BJ (cell line): ENCODE measurements at regions of chr16 and their contacts with region 1.

Region 1: GRCh38 chr16:81723098-81723723 is 55.9 kb upstream of the PLCG2 start:
- DNase-seq: no peak
- H3K4me3 ChIP-seq: no peak overlapping the region
- H3K27me3 ChIP-seq: peaks cover 5% of the 10 kb centered on the region; the same call in 1 of the 2 replicates
- CTCF ChIP-seq: peak; percentile 56

Region 2: GRCh38 chr16:81366316-81366932 is 356.8 kb before region 1 on chr16:
- CTCF ChIA-PET with region 1: interaction called, 15 read pairs
- POLR2A ChIA-PET with region 1: no interaction called
- DNase-seq: no peak
- H3K4me3 ChIP-seq: no peak overlapping the region
- H3K27me3 ChIP-seq: no peaks in the 10 kb centered on the region
- CTCF ChIP-seq: peak; percentile 51

Region 3: GRCh38 chr16:81403616-81404373 is 319.4 kb before region 1 on chr16:
- CTCF ChIA-PET with region 1: interaction called, 65 read pairs
- POLR2A ChIA-PET with region 1: no interaction called
- DNase-seq: no peak
- H3K4me3 ChIP-seq: peak overlapping the region; percentile 31
- H3K27me3 ChIP-seq: no peaks in the 10 kb centered on the region
- CTCF ChIP-seq: peak; percentile 97

Region 4: GRCh38 chr16:81623363-81624102 is 99.7 kb before region 1 on chr16:
- CTCF ChIA-PET with region 1: interaction called, 38 read pairs
- POLR2A ChIA-PET with region 1: no interaction called
- DNase-seq: no peak
- H3K4me3 ChIP-seq: no peak overlapping the region
- H3K27me3 ChIP-seq: no peaks in the 10 kb centered on the region
- CTCF ChIP-seq: peak; percentile 59

Region 5: GRCh38 chr16:81711657-81712319 is 11.4 kb before region 1 on chr16:
- CTCF ChIA-PET with region 1: interaction called, 22 read pairs
- POLR2A ChIA-PET with region 1: no interaction called
- DNase-seq: peak; percentile 74
- H3K4me3 ChIP-seq: no peak overlapping the region
- H3K27me3 ChIP-seq: peaks cover 2% of the 10 kb centered on the region; the same call in 1 of the 2 replicates
- CTCF ChIP-seq: peak; percentile 9; the same call in 1 of the 2 replicates

Region 6: GRCh38 chr16:81737885-81738786 is 14.9 kb after region 1 on chr16:
- CTCF ChIA-PET with region 1: interaction called, 10 read pairs
- POLR2A ChIA-PET with region 1: no interaction called
- DNase-seq: peak; percentile 7
- H3K4me3 ChIP-seq: no peak overlapping the region; the same call in 1 of the 2 replicates
- H3K27me3 ChIP-seq: no peaks in the 10 kb centered on the region
- CTCF ChIP-seq: peak; percentile 85